ENCODE measurements at regions of chr13 and their contacts with region 1.

Region 1: DNA sequence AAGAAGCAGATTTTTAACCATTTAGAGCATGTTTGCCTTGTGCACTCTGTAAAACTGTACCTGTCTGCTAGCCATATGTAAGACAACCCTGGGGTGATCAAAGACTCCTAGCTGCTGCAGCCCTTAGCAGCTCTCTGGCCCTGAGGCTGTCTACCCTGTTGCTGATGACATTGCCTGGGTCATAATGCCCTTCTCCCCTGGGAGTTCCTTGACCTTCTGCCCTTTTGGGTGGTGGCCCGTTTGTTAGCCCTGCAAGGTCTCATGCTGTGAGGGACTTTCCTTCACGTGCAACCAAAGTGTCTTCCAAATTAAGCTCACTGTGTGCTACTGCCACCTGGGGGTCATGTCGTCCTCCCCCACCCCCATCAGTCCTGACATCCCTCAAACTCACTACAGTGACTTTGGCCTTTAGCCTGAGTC is 7.4 kb downstream of the GPC6 start:
- DNase-seq: peak in 2 of 4 experiments; percentile 52 to 65
- ATAC-seq: peak; percentile 89
- H3K4me3 ChIP-seq: no peak overlapping the region
- H3K27ac ChIP-seq: no peak overlapping the region
- H3K4me1 ChIP-seq: no peaks in the 10 kb centered on the region
- H3K27me3 ChIP-seq: no peaks in the 10 kb centered on the region
- CTCF ChIP-seq: peak in 1 of 3 experiments; percentile 65; a peak in 2 of 6 replicates
- EP300 ChIP-seq: no peak
- POLR2A ChIP-seq: no peak
- RAD21 ChIP-seq: no peak

Region 2: DNA sequence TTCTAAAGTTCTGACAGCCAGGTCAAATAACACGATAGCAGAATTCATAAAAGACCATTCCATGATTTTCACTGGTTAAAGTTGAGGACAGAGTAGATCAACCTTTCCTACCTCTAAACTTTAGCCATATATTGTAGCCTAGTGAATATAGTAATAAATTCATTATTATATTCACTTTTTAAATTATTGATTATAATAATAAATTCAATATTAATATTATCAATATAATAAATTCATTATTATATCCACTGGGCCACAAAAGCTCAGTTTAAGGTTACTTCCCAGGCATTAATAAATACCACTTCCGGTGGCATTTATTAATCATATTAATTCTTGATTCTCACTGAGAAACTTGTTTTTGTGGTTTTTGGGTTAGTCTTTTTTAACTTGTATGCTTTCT is 93.1 kb before region 1 on chr13:
- CTCF ChIA-PET with region 1: no interaction called
- POLR2A ChIA-PET with region 1: no interaction called
- in situ Hi-C with region 1: no loop called
- intact Hi-C with region 1: no loop called
- DNase-seq: no peak
- ATAC-seq: no peak
- H3K4me3 ChIP-seq: no peak overlapping the region
- H3K27ac ChIP-seq: no peak overlapping the region
- H3K4me1 ChIP-seq: no peaks in the 10 kb centered on the region
- H3K27me3 ChIP-seq: no peaks in the 10 kb centered on the region
- CTCF ChIP-seq: no peak
- EP300 ChIP-seq: no peak
- POLR2A ChIP-seq: no peak
- RAD21 ChIP-seq: no peak

Region 3: DNA sequence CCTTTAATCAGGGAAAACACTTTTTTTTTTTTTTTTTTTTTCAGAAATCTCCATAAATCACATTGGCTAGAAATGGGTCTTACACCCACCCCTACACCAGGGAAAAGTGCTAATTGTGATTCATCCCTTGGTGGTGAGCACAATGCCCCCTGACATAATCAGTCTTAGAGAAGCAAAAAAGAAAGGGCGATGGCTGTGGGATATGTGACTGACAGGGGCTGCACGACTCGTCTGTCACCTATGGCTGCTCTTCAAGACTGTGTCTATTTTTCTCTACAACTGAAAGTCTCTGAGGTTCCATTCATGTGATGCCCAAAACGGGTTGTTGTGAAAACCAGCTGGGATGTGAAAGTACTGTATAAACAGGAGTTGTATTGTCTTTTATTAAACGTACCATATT is 11.0 kb before region 1 on chr13:
- CTCF ChIA-PET with region 1: no interaction called
- POLR2A ChIA-PET with region 1: interaction called, 12 read pairs
- in situ Hi-C with region 1: no loop called
- intact Hi-C with region 1: no loop called
- DNase-seq: no peak
- ATAC-seq: no peak
- H3K4me3 ChIP-seq: no peak overlapping the region
- H3K27ac ChIP-seq: no peak overlapping the region
- H3K4me1 ChIP-seq: peaks cover 0 to 13% of the 10 kb centered on the region in 2 experiments; a peak in 2 of 5 replicates
- H3K27me3 ChIP-seq: peaks cover 24% of the 10 kb centered on the region in 2 experiments; a peak in 4 of 5 replicates
- CTCF ChIP-seq: no peak
- EP300 ChIP-seq: no peak
- POLR2A ChIP-seq: no peak
- RAD21 ChIP-seq: no peak

Region 4: GRCh38 chr13:93248627-93249047 is 14.6 kb after region 1 on chr13:
- CTCF ChIA-PET with region 1: no interaction called
- POLR2A ChIA-PET with region 1: interaction called, 16 read pairs
- in situ Hi-C with region 1: no loop called
- intact Hi-C with region 1: no loop called
- DNase-seq: peak in 2 of 4 experiments; percentile 55
- ATAC-seq: peak; percentile 85
- H3K4me3 ChIP-seq: no peak overlapping the region
- H3K27ac ChIP-seq: no peak overlapping the region
- H3K4me1 ChIP-seq: peaks cover 0 to 4% of the 10 kb centered on the region in 2 experiments; a peak in 2 of 5 replicates
- H3K27me3 ChIP-seq: peaks cover 0 to 3% of the 10 kb centered on the region in 2 experiments; a peak in 1 of 5 replicates
- CTCF ChIP-seq: peak in 1 of 3 experiments; percentile 86; a peak in 2 of 6 replicates
- EP300 ChIP-seq: no peak
- POLR2A ChIP-seq: no peak
- RAD21 ChIP-seq: no peak

Region 5: DNA sequence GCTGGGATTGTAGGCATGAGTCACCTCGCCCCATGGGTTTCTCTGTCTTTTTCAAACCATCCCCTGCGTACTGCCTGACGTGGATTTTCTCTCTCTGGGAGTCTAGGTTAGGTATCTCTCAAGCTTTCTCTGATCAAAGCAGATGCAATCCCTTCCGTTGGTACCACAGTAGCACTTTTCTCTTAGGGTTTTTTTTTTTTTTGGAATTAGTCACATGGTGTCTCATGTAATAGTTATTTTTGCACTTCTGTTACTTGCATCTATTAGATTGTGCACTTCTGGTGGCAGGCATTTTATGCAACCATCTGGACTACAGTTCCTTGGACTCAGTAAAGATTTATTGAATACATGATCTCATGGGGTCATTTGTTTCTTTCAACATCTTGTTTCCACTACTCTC is 64.7 kb after region 1 on chr13:
- CTCF ChIA-PET with region 1: no interaction called
- POLR2A ChIA-PET with region 1: no interaction called
- in situ Hi-C with region 1: no loop called
- intact Hi-C with region 1: no loop called
- DNase-seq: no peak
- ATAC-seq: peak; percentile 5; the same call in 1 of the 3 replicates
- H3K4me3 ChIP-seq: no peak overlapping the region
- H3K27ac ChIP-seq: no peak overlapping the region
- H3K4me1 ChIP-seq: no peaks in the 10 kb centered on the region
- H3K27me3 ChIP-seq: peaks cover 2 to 5% of the 10 kb centered on the region in 2 experiments; a peak in 2 of 5 replicates
- CTCF ChIP-seq: no peak
- EP300 ChIP-seq: no peak
- POLR2A ChIP-seq: no peak
- RAD21 ChIP-seq: no peak

Measured in K562 (cell line).